PC-9 (cell line): ENCODE measurements at regions of chr9 and their contacts with region 1.

Region 1: DNA sequence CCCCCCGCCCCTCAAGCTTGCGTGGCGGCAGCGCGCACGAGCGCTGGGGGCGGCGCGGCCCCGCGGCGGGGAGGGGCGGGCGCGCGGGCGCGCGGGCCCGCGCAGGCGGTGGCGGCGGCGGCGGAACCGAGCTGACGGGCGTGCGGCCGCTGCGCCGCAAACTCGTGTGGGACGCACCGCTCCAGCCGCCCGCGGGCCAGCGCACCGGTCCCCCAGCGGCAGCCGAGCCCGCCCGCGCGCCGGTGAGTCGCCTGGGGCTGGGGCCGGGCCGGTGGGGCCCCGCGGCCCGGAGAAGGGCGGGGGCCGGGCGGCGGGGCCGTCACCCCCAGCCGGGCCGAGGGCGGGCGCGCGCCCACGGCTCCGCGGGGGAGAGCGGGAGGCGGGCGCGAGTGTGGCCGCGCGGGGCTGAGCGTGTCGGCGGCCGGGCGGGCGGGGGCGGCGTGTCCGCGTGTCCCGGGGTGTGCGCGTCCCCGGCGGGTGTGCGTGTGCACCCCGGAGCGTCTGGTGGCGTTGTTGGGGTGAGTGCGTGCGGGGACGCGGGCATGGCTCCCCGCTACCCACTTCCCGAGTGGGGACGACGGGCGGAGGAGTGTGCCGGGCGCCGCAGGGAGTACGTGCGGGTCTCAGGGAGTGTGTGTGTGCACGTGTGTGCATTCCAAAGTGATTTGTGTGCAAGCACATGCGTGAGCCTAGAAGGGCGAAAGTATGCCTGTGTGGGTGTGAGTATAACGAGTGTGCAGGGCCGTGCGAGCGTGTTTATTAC is at the start of gene NEK6:
- DNase-seq: no peak
- H3K4me3 ChIP-seq: peak within 1 kb of the TSS; percentile 72
- H3K27ac ChIP-seq: peak within 1 kb of the TSS; percentile 72
- H3K4me1 ChIP-seq: peaks cover 43% of the 10 kb centered on the region
- H3K27me3 ChIP-seq: no peaks in the 10 kb centered on the region
- CTCF ChIP-seq: no peak
- total RNA-seq, gene NEK6: 48.1 and 57.9 TPM in 2 replicates

Region 2: GRCh38 chr9:123997665-123998277 is 260.3 kb before region 1 on chr9:
- CTCF ChIA-PET with region 1: no interaction called
- POLR2A ChIA-PET with region 1: no interaction called
- intact Hi-C with region 1: no loop called
- DNase-seq: no peak
- H3K4me3 ChIP-seq: no peak overlapping the region
- H3K27ac ChIP-seq: no peak overlapping the region
- H3K4me1 ChIP-seq: no peaks in the 10 kb centered on the region
- H3K27me3 ChIP-seq: peaks cover 80% of the 10 kb centered on the region
- CTCF ChIP-seq: no peak

Region 3: DNA sequence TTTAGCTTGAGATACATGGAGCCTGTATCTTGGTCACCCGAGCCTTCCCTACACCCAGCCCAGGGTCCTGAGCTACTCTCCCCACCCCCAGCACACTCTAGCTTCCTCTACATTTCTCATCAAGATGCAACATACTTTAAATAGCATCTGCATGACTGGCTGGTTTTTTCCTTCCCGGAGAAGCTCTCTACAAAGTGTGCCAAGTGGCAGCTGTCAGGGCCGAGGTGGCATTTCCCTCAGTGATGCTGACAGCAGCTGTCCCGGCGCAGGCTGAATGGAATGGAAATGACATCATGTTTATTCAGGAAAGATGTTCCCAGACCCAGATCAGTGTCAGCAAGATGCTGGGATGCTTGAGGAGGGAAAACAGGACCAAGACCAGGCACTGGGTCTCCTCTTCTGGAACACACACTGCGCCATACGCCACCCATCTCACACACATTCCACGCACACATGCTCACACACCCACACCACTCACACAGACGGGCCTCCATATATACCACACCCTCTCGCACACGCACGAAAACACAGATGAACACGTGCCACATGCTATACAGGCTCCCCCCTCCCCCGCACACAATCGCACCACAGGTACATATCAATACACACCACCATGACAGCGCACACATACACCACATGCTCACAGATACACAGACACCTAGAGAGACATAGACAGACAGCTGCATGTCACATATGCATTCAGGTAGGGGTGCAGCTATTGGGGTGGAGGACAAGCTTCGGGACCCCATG is 178.7 kb before region 1 on chr9:
- CTCF ChIA-PET with region 1: no interaction called
- POLR2A ChIA-PET with region 1: no interaction called
- intact Hi-C with region 1: loop called (anchors 1 kb)
- DNase-seq: peak; percentile 58 to 84
- H3K4me3 ChIP-seq: no peak overlapping the region
- H3K27ac ChIP-seq: peak overlapping the region; percentile 70
- H3K4me1 ChIP-seq: peaks cover 25% of the 10 kb centered on the region
- H3K27me3 ChIP-seq: peaks cover 9% of the 10 kb centered on the region; the same call in 1 of the 2 replicates
- CTCF ChIP-seq: no peak

Region 4: GRCh38 chr9:124138993-124139392 is 119.0 kb before region 1 on chr9:
- CTCF ChIA-PET with region 1: no interaction called
- POLR2A ChIA-PET with region 1: no interaction called
- intact Hi-C with region 1: loop called (anchors 1 kb)
- DNase-seq: no peak
- H3K4me3 ChIP-seq: no peak overlapping the region
- H3K27ac ChIP-seq: no peak overlapping the region
- H3K4me1 ChIP-seq: peaks cover 32% of the 10 kb centered on the region
- H3K27me3 ChIP-seq: no peaks in the 10 kb centered on the region
- CTCF ChIP-seq: no peak

Region 5: GRCh38 chr9:124285903-124286291 is 27.9 kb after region 1 on chr9:
- CTCF ChIA-PET with region 1: no interaction called
- POLR2A ChIA-PET with region 1: interaction called, 4 read pairs
- intact Hi-C with region 1: loop called (anchors 1 kb)
- DNase-seq: no peak
- H3K4me3 ChIP-seq: no peak overlapping the region
- H3K27ac ChIP-seq: no peak overlapping the region
- H3K4me1 ChIP-seq: no peaks in the 10 kb centered on the region
- H3K27me3 ChIP-seq: no peaks in the 10 kb centered on the region
- CTCF ChIP-seq: no peak

Region 6: GRCh38 chr9:124309665-124310064 is 51.6 kb after region 1 on chr9:
- CTCF ChIA-PET with region 1: no interaction called
- POLR2A ChIA-PET with region 1: interaction called, 6 read pairs
- intact Hi-C with region 1: loop called (anchors 2 kb)
- DNase-seq: peak; percentile 92 to 96
- H3K4me3 ChIP-seq: no peak overlapping the region
- H3K27ac ChIP-seq: peak overlapping the region; percentile 13; the same call in 1 of the 2 replicates
- H3K4me1 ChIP-seq: peaks cover 37% of the 10 kb centered on the region
- H3K27me3 ChIP-seq: no peaks in the 10 kb centered on the region
- CTCF ChIP-seq: no peak